Panc1 (cell line): ENCODE measurements at regions of chr4 and their contacts with region 1.

Region 1: GRCh38 chr4:153791746-153792617 is 3.1 kb upstream of the SFRP2 start:
- DNase-seq: no peak
- ATAC-seq: no peak
- H3K4me3 ChIP-seq: no peak overlapping the region
- H3K27ac ChIP-seq: no peak overlapping the region
- H3K4me1 ChIP-seq: no peaks in the 10 kb centered on the region
- H3K27me3 ChIP-seq: peaks cover 11% of the 10 kb centered on the region
- CTCF ChIP-seq: peak; percentile 21; the same call in 1 of the 2 replicates

Region 2: DNA sequence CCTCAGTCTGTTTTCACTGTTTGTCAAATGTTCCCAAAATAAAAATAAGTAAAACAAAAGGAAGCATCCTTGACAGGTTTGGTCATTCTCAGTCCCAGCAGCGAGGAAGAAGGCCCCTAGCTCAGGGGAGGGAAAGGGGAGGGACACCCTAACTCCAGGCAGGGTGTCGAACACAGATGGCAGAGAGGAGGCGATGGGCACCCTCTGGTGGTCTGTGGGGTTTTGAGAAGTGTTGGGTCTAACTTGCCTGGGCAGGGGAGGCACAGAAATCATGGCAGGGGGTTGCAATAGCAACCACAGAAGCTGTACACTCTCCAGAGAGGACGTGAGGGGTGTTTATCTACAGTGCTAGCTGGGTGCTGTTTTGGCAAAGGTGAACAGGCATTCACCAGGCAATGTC is 226.7 kb after region 1 on chr4:
- CTCF ChIA-PET with region 1: no interaction called
- POLR2A ChIA-PET with region 1: no interaction called
- in situ Hi-C with region 1: no loop called
- intact Hi-C with region 1: loop called (anchors 10 kb)
- DNase-seq: no peak
- ATAC-seq: no peak
- H3K4me3 ChIP-seq: no peak overlapping the region
- H3K27ac ChIP-seq: no peak overlapping the region
- H3K4me1 ChIP-seq: no peaks in the 10 kb centered on the region
- H3K27me3 ChIP-seq: no peaks in the 10 kb centered on the region
- CTCF ChIP-seq: no peak